ENCODE measurements at regions of chr3 and their contacts with region 1.

Region 1: DNA sequence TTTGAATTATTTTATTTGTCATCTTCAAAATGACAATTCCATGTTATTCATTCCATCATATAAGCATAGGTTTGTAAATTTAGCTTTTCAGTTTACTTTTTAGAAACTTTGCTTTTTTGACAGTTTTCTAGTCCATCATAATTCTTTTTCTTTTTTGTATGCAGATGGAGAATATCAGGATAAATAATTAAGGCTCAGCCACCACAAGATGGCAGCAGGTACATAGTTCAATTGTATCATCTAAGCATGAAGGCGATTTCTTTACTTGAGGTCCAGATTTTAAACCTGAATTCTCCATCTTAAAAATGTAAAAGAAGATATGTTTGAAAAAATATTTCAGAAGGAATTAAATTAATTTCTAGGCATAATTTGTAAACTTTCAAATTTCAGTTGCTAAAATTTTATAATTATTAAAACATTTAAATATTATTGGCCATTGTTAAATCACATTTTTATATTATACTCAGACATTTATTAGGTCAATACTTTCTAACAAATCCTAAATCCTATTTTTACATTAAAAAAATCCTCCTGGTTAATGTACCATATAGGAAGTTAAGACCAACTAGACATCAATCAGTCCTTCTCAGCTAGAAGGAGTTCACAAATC is 15.1 kb downstream of the PLSCR5 start:
- DNase-seq: peak in 2 of 9 experiments; percentile 11 to 23
- ATAC-seq: no peak
- H3K4me3 ChIP-seq: no peak overlapping the region
- H3K4me3 Mint-ChIP-seq: no peak overlapping the region
- H3K27ac ChIP-seq: no peak overlapping the region
- H3K27ac Mint-ChIP-seq: no peak overlapping the region
- H3K4me1 ChIP-seq: no peaks in the 10 kb centered on the region
- H3K4me1 Mint-ChIP-seq: no peaks in the 10 kb centered on the region
- H3K27me3 ChIP-seq: no peaks in the 10 kb centered on the region
- H3K27me3 Mint-ChIP-seq: no peaks in the 10 kb centered on the region
- CTCF ChIP-seq: no peak

Region 2: DNA sequence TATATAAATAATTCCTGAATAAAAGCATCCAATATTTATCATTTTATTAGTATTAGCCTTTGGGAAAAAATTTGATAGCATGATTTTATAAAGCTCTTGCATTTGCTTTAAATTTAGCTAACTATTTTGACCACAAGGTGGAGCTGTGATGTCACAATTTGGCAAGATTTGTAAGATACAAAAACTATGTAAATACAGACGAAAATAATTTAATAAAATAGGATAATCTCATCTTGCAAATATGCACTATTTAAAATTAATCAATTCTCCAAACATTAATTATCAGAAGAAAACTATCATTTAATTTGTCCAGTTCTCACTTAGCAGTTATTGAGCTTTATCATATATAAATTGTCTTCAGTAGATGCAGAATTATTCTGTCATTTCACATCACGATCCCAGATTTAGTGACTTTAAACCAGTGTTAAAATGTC is 524.4 kb before region 1 on chr3:
- CTCF ChIA-PET with region 1: no interaction called
- POLR2A ChIA-PET with region 1: no interaction called
- intact Hi-C with region 1: loop called (anchors 5 kb)
- DNase-seq: peak in 1 of 9 experiments; percentile 18
- ATAC-seq: no peak
- H3K4me3 ChIP-seq: no peak overlapping the region
- H3K4me3 Mint-ChIP-seq: no peak overlapping the region
- H3K27ac ChIP-seq: no peak overlapping the region
- H3K27ac Mint-ChIP-seq: no peak overlapping the region
- H3K4me1 ChIP-seq: no peaks in the 10 kb centered on the region
- H3K4me1 Mint-ChIP-seq: no peaks in the 10 kb centered on the region
- H3K27me3 ChIP-seq: no peaks in the 10 kb centered on the region
- H3K27me3 Mint-ChIP-seq: no peaks in the 10 kb centered on the region
- CTCF ChIP-seq: peak; percentile 58

Region 3: GRCh38 chr3:146072824-146073223 is 517.2 kb before region 1 on chr3:
- CTCF ChIA-PET with region 1: no interaction called
- POLR2A ChIA-PET with region 1: no interaction called
- intact Hi-C with region 1: loop called (anchors 5 kb)
- DNase-seq: no peak
- ATAC-seq: no peak
- H3K4me3 ChIP-seq: no peak overlapping the region
- H3K4me3 Mint-ChIP-seq: no peak overlapping the region
- H3K27ac ChIP-seq: no peak overlapping the region
- H3K27ac Mint-ChIP-seq: no peak overlapping the region
- H3K4me1 ChIP-seq: no peaks in the 10 kb centered on the region
- H3K4me1 Mint-ChIP-seq: no peaks in the 10 kb centered on the region
- H3K27me3 ChIP-seq: no peaks in the 10 kb centered on the region
- H3K27me3 Mint-ChIP-seq: no peaks in the 10 kb centered on the region
- CTCF ChIP-seq: no peak

Region 4: GRCh38 chr3:146705205-146705604 is 115.2 kb after region 1 on chr3:
- CTCF ChIA-PET with region 1: no interaction called
- POLR2A ChIA-PET with region 1: no interaction called
- intact Hi-C with region 1: no loop called
- DNase-seq: no peak
- ATAC-seq: no peak
- H3K4me3 ChIP-seq: no peak overlapping the region
- H3K4me3 Mint-ChIP-seq: no peak overlapping the region
- H3K27ac ChIP-seq: no peak overlapping the region
- H3K27ac Mint-ChIP-seq: no peak overlapping the region
- H3K4me1 ChIP-seq: no peaks in the 10 kb centered on the region
- H3K4me1 Mint-ChIP-seq: no peaks in the 10 kb centered on the region
- H3K27me3 ChIP-seq: no peaks in the 10 kb centered on the region
- H3K27me3 Mint-ChIP-seq: no peaks in the 10 kb centered on the region
- CTCF ChIP-seq: no peak

Measured in CD8-positive, alpha-beta T cell (primary cell).